Activated T-helper 1 cell treated with anti-CD3 and anti-CD28 coated beads, Interleukin-12 subunit alpha, Interleukin-12 subunit beta, Interleukin-2, Interleukin-4 antibody, amounts not matched to agents 30 ng/mL and 10 ng/mL and 1 ng/mL, durations not matched to agents 14 hours and 24 hours and 36 hours (primary cell): ENCODE measurements at regions of chr11 and their contacts with region 1.

Region 1: GRCh38 chr11:12149672-12150225 is 39.4 kb downstream of the MICAL2 start:
- DNase-seq: peak; percentile 48
- H3K4me3 Mint-ChIP-seq: peak overlapping the region; percentile 43
- H3K27ac Mint-ChIP-seq: peak overlapping the region; percentile 92
- H3K4me1 Mint-ChIP-seq: peaks cover 85% of the 10 kb centered on the region
- H3K27me3 Mint-ChIP-seq: no peaks in the 10 kb centered on the region

Region 2: DNA sequence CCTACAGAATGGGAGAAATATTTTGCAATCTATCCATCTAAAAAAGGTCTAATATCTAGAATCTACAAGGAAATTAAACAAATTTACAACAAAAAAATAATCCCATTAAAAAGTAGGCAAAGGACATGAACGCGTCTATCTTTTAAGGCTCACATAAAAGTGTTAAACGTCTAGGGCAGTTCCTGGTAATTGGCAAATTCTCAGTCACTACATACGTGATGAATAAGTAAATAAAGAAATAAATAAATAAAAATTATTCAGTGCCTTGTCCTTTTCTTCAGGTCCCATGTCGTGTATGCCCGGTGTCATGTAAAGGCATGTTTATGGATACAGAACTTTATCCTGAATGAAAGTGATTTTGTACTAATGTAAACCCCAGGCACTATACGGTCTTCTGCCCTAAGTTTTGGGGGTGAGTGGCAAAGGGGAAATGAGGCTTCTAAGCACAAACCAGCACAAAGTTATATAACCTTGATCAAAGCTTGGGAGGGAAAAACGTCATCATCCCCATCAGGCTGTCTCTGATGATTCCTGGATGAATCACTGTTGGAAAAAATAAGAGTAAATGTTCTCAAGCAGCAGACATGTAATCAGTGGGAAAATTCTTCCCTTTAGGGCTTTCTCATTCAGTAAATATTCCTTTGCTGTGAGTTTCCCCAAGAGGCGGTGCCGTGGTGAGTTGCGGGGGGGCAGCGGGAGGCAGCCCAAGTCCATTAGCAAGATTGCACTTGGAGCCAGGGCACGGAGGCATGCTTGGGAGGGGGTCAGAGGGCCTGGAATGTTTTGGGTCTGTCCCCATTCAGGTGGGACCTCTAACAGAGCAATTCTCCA is 69.8 kb before region 1 on chr11:
- intact Hi-C with region 1: no loop called
- DNase-seq: no peak
- H3K4me3 Mint-ChIP-seq: no peak overlapping the region
- H3K27ac Mint-ChIP-seq: no peak overlapping the region
- H3K4me1 Mint-ChIP-seq: peaks cover 15% of the 10 kb centered on the region
- H3K27me3 Mint-ChIP-seq: peaks cover 2% of the 10 kb centered on the region

Region 3: DNA sequence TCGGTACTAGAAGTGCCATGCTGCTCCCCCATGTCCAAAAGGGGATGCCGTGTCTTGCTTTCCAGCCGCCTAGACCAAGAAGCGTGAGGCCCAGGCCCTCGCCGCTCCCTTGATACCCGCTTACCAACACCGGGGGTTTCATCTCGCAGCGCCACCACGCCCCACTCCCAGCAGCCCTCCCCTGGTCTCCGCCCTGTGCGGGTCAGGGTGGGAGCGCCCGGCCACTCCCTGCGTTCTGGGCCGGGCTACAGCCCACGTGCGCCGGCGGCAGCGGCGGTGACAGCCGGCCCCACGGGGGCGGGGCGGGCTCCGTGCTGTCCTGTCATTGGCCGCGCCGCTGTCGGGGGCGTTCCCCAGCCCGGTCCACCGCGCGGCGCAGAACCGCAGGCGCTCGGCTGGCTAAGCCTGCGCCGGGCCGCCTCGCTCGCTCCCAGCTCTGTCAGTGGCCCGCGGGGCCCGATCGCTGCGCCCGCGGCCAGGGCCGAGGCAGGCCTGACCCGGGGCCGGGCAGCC is 39.5 kb before region 1 on chr11 and contains the start of gene MICAL2:
- intact Hi-C with region 1: loop called (anchors 1 kb)
- DNase-seq: peak; percentile 90
- H3K4me3 Mint-ChIP-seq: peak within 1 kb of the TSS; percentile 90
- H3K27ac Mint-ChIP-seq: peak within 1 kb of the TSS; percentile 99
- H3K4me1 Mint-ChIP-seq: peaks cover 75% of the 10 kb centered on the region
- H3K27me3 Mint-ChIP-seq: no peaks in the 10 kb centered on the region
- total RNA-seq, gene MICAL2: 595 and 619 TPM in 2 replicates

Region 4: DNA sequence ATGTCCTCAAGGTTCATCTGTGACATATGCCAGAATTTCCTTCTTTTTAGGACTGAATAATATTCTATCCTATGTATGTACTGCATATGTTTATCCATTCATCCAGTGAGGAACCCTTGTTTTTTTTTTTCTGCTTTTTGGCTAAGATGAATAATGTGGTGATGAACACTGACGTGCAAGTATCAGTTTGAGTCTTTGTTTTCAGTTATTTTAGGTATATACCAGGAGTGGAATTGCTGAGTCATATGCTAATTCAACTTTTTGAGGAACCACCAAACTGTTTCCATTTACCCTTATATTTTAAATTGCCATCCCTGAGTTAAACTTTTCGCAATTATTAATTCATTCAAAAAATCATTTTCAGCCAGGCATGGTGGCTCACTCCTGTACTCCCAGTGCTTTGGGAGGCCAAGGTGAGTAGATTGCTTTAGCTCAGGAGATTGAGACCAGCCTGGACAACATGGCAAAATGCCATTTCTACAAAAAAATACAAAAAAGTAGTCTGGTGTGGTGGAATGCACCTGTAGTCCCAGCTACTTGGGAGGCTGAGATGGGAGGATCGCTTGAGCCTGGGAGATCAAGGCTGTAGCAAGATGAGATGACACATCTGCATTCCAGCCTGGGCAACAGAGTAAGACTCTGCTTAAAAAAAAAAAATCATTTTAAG is 24.9 kb after region 1 on chr11:
- intact Hi-C with region 1: loop called (anchors 1 kb)
- DNase-seq: no peak
- H3K4me3 Mint-ChIP-seq: peak overlapping the region; percentile 75
- H3K27ac Mint-ChIP-seq: peak overlapping the region; percentile 93
- H3K4me1 Mint-ChIP-seq: peaks cover 79% of the 10 kb centered on the region
- H3K27me3 Mint-ChIP-seq: peaks cover 2% of the 10 kb centered on the region

Region 5: DNA sequence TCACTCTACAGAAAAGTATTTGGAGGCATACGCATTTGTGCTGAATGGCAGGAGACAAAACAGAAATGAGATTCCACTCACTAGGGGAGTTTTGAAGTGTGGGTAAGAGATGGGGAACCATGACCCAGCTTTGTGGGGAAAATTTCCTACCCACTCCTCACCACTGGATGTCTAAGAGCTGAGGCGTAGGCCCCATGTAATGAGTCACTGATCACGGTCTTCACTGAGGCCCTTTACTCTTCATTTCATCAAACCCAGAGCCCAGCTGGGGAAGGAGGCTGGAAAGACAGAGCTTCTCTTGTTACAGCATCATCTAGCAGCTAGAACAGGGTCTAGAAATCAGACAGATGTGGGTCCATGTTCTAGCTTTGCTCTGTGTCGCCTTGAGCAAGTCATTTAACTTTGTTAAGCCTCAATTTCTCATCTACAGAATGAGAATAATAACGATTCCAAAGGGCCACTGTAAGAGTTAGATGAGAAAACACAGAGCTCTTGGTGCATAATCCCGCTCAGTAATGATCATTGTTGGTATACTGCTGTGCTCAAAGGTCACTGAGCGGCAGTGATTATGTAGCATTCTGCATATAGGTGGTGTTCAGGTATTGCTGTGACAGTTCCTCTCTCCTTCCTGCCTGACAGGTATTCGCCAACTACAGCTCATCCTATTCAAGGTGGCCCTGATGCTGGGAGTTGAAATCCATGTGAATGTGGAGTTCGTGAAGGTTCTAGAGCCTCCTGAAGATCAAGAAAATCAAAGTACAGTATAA is 57.8 kb after region 1 on chr11:
- intact Hi-C with region 1: loop called (anchors 1 kb)
- DNase-seq: no peak
- H3K4me3 Mint-ChIP-seq: peak overlapping the region; percentile 68
- H3K27ac Mint-ChIP-seq: peak overlapping the region; percentile 93
- H3K4me1 Mint-ChIP-seq: peaks cover 87% of the 10 kb centered on the region
- H3K27me3 Mint-ChIP-seq: no peaks in the 10 kb centered on the region

Region 6: GRCh38 chr11:12235947-12236743 is 86.4 kb after region 1 on chr11:
- intact Hi-C with region 1: loop called (anchors 1 kb)
- DNase-seq: peak; percentile 67
- H3K4me3 Mint-ChIP-seq: peak overlapping the region; percentile 77
- H3K27ac Mint-ChIP-seq: peak overlapping the region; percentile 96
- H3K4me1 Mint-ChIP-seq: peaks cover 65% of the 10 kb centered on the region
- H3K27me3 Mint-ChIP-seq: no peaks in the 10 kb centered on the region

Region 7: GRCh38 chr11:13289081-13289480 is 1139.3 kb after region 1 on chr11:
- intact Hi-C with region 1: loop called (anchors 1 kb)
- DNase-seq: no peak
- H3K4me3 Mint-ChIP-seq: no peak overlapping the region
- H3K27ac Mint-ChIP-seq: peak overlapping the region; percentile 84
- H3K4me1 Mint-ChIP-seq: peaks cover 84% of the 10 kb centered on the region
- H3K27me3 Mint-ChIP-seq: no peaks in the 10 kb centered on the region